Panc1 (cell line): ENCODE measurements at regions of chr7 and their contacts with region 1.

Region 1: DNA sequence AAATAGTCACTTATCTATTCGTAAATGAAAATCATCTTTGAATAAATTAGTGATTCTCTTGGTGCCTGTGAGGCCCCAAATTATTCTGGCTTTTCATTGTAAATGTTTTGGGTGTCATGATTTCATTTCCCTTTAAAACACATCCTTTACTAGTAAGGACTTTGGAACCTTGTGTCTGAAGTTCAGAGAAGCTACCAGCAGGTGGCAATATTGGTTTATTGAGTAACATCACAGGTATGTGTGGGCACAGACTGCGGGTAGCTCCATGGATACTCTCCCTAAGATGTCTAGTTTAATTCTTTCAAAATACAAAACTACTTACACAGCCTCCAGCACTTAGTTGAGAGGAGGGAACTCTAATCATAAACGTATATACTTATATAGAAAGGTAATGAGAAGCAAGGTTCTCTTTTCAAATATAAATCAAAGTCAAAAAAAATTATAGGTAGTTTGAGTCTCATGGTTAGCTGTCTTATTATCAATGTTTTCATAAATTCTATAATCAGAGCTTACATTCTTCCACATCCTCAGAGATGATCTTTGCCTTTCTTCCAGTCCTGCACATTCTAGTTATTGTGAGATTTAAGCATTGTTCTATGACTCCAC is 449.6 kb downstream of the GRM8 start:
- DNase-seq: peak; percentile 68
- ATAC-seq: peak; percentile 92
- H3K4me3 ChIP-seq: no peak overlapping the region
- H3K27ac ChIP-seq: no peak overlapping the region
- H3K4me1 ChIP-seq: no peaks in the 10 kb centered on the region
- H3K27me3 ChIP-seq: no peaks in the 10 kb centered on the region
- CTCF ChIP-seq: peak; percentile 72

Region 2: GRCh38 chr7:126760914-126761577 is 42.1 kb before region 1 on chr7:
- CTCF ChIA-PET with region 1: no interaction called
- POLR2A ChIA-PET with region 1: no interaction called
- in situ Hi-C with region 1: no loop called
- intact Hi-C with region 1: no loop called
- DNase-seq: no peak
- ATAC-seq: no peak
- H3K4me3 ChIP-seq: no peak overlapping the region
- H3K27ac ChIP-seq: no peak overlapping the region
- H3K4me1 ChIP-seq: no peaks in the 10 kb centered on the region
- H3K27me3 ChIP-seq: no peaks in the 10 kb centered on the region
- CTCF ChIP-seq: no peak

Region 3: GRCh38 chr7:127158659-127159058 is 355.5 kb after region 1 on chr7:
- CTCF ChIA-PET with region 1: no interaction called
- POLR2A ChIA-PET with region 1: no interaction called
- in situ Hi-C with region 1: no loop called
- intact Hi-C with region 1: loop called (anchors 10 kb)
- DNase-seq: peak; percentile 12
- ATAC-seq: no peak
- H3K4me3 ChIP-seq: no peak overlapping the region
- H3K27ac ChIP-seq: no peak overlapping the region
- H3K4me1 ChIP-seq: no peaks in the 10 kb centered on the region
- H3K27me3 ChIP-seq: no peaks in the 10 kb centered on the region
- CTCF ChIP-seq: peak; percentile 61

Region 4: GRCh38 chr7:127253281-127254162 is 450.4 kb after region 1 on chr7:
- CTCF ChIA-PET with region 1: no interaction called
- POLR2A ChIA-PET with region 1: no interaction called
- in situ Hi-C with region 1: no loop called
- intact Hi-C with region 1: loop called (anchors 2 kb)
- DNase-seq: peak; percentile 15
- ATAC-seq: peak; percentile 90
- H3K4me3 ChIP-seq: peak overlapping the region; percentile 58 to 83
- H3K27ac ChIP-seq: no peak overlapping the region
- H3K4me1 ChIP-seq: peaks cover 12% of the 10 kb centered on the region
- H3K27me3 ChIP-seq: peaks cover 38% of the 10 kb centered on the region
- CTCF ChIP-seq: peak; percentile 98

Region 5: DNA sequence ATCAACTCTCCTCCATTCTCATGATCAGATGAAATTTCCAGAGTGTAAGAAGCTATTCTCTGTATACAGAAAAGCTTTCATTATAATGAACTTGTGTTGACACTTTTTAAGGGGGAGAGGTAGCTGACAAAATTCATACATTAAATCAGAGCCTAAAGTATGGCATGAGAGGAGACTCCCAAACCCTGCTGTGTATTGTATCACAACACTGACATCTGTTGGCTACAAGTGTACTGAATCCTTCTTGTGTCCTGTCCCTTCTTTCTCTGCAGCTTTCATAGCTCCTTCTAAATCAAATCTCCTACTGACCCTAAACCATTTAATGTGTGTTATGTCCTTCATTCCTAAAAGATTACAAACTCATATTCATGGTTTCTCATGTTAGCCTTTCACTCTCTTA is 711.3 kb after region 1 on chr7:
- CTCF ChIA-PET with region 1: no interaction called
- POLR2A ChIA-PET with region 1: no interaction called
- in situ Hi-C with region 1: no loop called
- intact Hi-C with region 1: loop called (anchors 5 kb)
- DNase-seq: peak; percentile 41
- ATAC-seq: peak; percentile 92
- H3K4me3 ChIP-seq: no peak overlapping the region
- H3K27ac ChIP-seq: no peak overlapping the region
- H3K4me1 ChIP-seq: no peaks in the 10 kb centered on the region
- H3K27me3 ChIP-seq: peaks cover 15% of the 10 kb centered on the region
- CTCF ChIP-seq: peak; percentile 54; the same call in 1 of the 2 replicates